PC-9 (cell line): ENCODE measurements at regions of chr10 and their contacts with region 1.

Region 1: GRCh38 chr10:89553064-89553734 is 17.8 kb upstream of the SLC16A12 start:
- DNase-seq: peak; percentile 18 to 97
- H3K4me3 ChIP-seq: no peak overlapping the region
- H3K27ac ChIP-seq: peak overlapping the region; percentile 87
- H3K4me1 ChIP-seq: peaks cover 30% of the 10 kb centered on the region
- H3K27me3 ChIP-seq: no peaks in the 10 kb centered on the region
- CTCF ChIP-seq: no peak

Region 2: DNA sequence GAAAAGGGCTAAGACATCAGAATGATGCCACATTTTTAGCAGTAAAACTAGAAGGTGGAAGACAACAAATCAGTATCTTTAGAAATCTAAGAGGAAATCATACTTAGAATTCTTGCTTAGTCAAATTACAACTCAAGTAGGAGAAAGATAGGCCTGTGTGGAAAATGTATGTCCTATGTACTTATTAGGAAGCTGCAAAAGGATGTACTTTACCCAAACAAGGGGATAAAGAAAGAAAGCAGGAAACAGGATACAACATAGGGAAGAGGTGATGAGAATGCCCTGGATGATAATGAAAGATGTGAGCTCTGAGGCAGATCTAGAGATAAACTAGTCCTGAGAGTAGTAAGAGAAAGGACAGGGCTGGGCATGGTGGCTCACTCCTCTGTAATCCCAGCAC is 1025.0 kb before region 1 on chr10:
- CTCF ChIA-PET with region 1: no interaction called
- POLR2A ChIA-PET with region 1: no interaction called
- intact Hi-C with region 1: no loop called
- DNase-seq: peak in 1 of 2 experiments; percentile 1
- H3K4me3 ChIP-seq: no peak overlapping the region
- H3K27ac ChIP-seq: no peak overlapping the region
- H3K4me1 ChIP-seq: peaks cover 14% of the 10 kb centered on the region
- H3K27me3 ChIP-seq: no peaks in the 10 kb centered on the region
- CTCF ChIP-seq: no peak

Region 3: GRCh38 chr10:89466599-89467035 is 86.6 kb before region 1 on chr10:
- CTCF ChIA-PET with region 1: interaction called, 4 read pairs
- POLR2A ChIA-PET with region 1: no interaction called
- intact Hi-C with region 1: loop called (anchors 1 kb)
- DNase-seq: peak; percentile 69 to 91
- H3K4me3 ChIP-seq: no peak overlapping the region
- H3K27ac ChIP-seq: peak overlapping the region; percentile 20; the same call in 1 of the 2 replicates
- H3K4me1 ChIP-seq: peaks cover 30% of the 10 kb centered on the region
- H3K27me3 ChIP-seq: no peaks in the 10 kb centered on the region
- CTCF ChIP-seq: peak; percentile 55

Region 4: GRCh38 chr10:89531359-89531758 is 21.8 kb before region 1 on chr10:
- CTCF ChIA-PET with region 1: no interaction called
- POLR2A ChIA-PET with region 1: interaction called, 20 read pairs
- intact Hi-C with region 1: no loop called
- DNase-seq: no peak
- H3K4me3 ChIP-seq: no peak overlapping the region
- H3K27ac ChIP-seq: no peak overlapping the region
- H3K4me1 ChIP-seq: no peaks in the 10 kb centered on the region
- H3K27me3 ChIP-seq: no peaks in the 10 kb centered on the region
- CTCF ChIP-seq: no peak